H1 (cell line): ENCODE measurements at regions of chr19 and their contacts with region 1.

Region 1: GRCh38 chr19:10292206-10292788 is 2.5 kb downstream of the ICAM5 start:
- DNase-seq: peak; percentile 82 to 100
- H3K4me3 ChIP-seq: peak overlapping the region; percentile 38 to 67 (median 60); a peak in 7 of 8 replicates
- H3K27ac ChIP-seq: no peak overlapping the region
- H3K4me1 ChIP-seq: peaks cover 0 to 51% (median 24%) of the 10 kb centered on the region in 4 experiments; a peak in 6 of 7 replicates
- H3K27me3 ChIP-seq: peaks cover 58 to 96% (median 89%) of the 10 kb centered on the region in 4 experiments
- CTCF ChIP-seq: no peak
- EP300 ChIP-seq: no peak
- POLR2A ChIP-seq: no peak; a peak in 1 of 3 replicates
- RAD21 ChIP-seq: no peak

Region 2: GRCh38 chr19:10238172-10238783 is 54.0 kb before region 1 on chr19:
- CTCF ChIA-PET with region 1: no interaction called
- POLR2A ChIA-PET with region 1: no interaction called
- DNase-seq: no peak
- H3K4me3 ChIP-seq: no peak overlapping the region
- H3K27ac ChIP-seq: no peak overlapping the region
- H3K4me1 ChIP-seq: peaks cover 0 to 7% (median 2%) of the 10 kb centered on the region in 4 experiments; a peak in 4 of 7 replicates
- H3K27me3 ChIP-seq: no peaks in the 10 kb centered on the region
- CTCF ChIP-seq: no peak
- EP300 ChIP-seq: no peak
- POLR2A ChIP-seq: no peak
- RAD21 ChIP-seq: no peak

Region 3: GRCh38 chr19:10269333-10270179 is 22.7 kb before region 1 on chr19:
- CTCF ChIA-PET with region 1: interaction called, 94 read pairs
- POLR2A ChIA-PET with region 1: interaction called, 16 read pairs
- DNase-seq: peak in 1 of 2 experiments; percentile 99
- H3K4me3 ChIP-seq: peak overlapping the region; percentile 30 to 59 (median 38); a peak in 5 of 8 replicates
- H3K27ac ChIP-seq: no peak overlapping the region
- H3K4me1 ChIP-seq: peaks cover 0 to 8% (median 5%) of the 10 kb centered on the region in 4 experiments; a peak in 5 of 7 replicates
- H3K27me3 ChIP-seq: peaks cover 9 to 25% (median 23%) of the 10 kb centered on the region in 4 experiments
- CTCF ChIP-seq: peak; percentile 79 to 95 (median 88)
- EP300 ChIP-seq: no peak; a peak in 1 of 3 replicates
- POLR2A ChIP-seq: no peak
- RAD21 ChIP-seq: peak; percentile 94 to 97

Region 4: GRCh38 chr19:10305139-10305806 is 13.0 kb after region 1 on chr19:
- CTCF ChIA-PET with region 1: interaction called, 10 read pairs
- POLR2A ChIA-PET with region 1: interaction called, 5 read pairs
- DNase-seq: no peak
- H3K4me3 ChIP-seq: no peak overlapping the region
- H3K27ac ChIP-seq: no peak overlapping the region
- H3K4me1 ChIP-seq: no peaks in the 10 kb centered on the region
- H3K27me3 ChIP-seq: no peaks in the 10 kb centered on the region
- CTCF ChIP-seq: no peak
- EP300 ChIP-seq: no peak
- POLR2A ChIP-seq: no peak
- RAD21 ChIP-seq: no peak

Region 5: GRCh38 chr19:10315335-10316214 is 23.3 kb after region 1 on chr19 and contains the start of gene FDX2:
- CTCF ChIA-PET with region 1: no interaction called
- POLR2A ChIA-PET with region 1: interaction called, 12 read pairs
- DNase-seq: peak; percentile 79 to 97
- H3K4me3 ChIP-seq: peak within 1 kb of the TSS; percentile 80 to 94 (median 92)
- H3K27ac ChIP-seq: peak within 1 kb of the TSS; percentile 72
- H3K4me1 ChIP-seq: no peaks in the 10 kb centered on the region; a peak in 1 of 7 replicates
- H3K27me3 ChIP-seq: no peaks in the 10 kb centered on the region
- CTCF ChIP-seq: no peak
- EP300 ChIP-seq: no peak
- POLR2A ChIP-seq: peak; percentile 78 to 91
- RAD21 ChIP-seq: peak in 1 of 2 experiments; percentile 4; a peak in 1 of 4 replicates
- total RNA-seq, gene FDX2: 27.0 and 27.8 TPM in 2 replicates